Activated T-helper 1 cell treated with anti-CD3 and anti-CD28 coated beads, Interleukin-12 subunit alpha, Interleukin-12 subunit beta, Interleukin-2, Interleukin-4 antibody, amounts not matched to agents 30 ng/mL and 10 ng/mL and 1 ng/mL, durations not matched to agents 14 hours and 24 hours and 36 hours (primary cell): ENCODE measurements at regions of chr3 and their contacts with region 1.

Region 1: DNA sequence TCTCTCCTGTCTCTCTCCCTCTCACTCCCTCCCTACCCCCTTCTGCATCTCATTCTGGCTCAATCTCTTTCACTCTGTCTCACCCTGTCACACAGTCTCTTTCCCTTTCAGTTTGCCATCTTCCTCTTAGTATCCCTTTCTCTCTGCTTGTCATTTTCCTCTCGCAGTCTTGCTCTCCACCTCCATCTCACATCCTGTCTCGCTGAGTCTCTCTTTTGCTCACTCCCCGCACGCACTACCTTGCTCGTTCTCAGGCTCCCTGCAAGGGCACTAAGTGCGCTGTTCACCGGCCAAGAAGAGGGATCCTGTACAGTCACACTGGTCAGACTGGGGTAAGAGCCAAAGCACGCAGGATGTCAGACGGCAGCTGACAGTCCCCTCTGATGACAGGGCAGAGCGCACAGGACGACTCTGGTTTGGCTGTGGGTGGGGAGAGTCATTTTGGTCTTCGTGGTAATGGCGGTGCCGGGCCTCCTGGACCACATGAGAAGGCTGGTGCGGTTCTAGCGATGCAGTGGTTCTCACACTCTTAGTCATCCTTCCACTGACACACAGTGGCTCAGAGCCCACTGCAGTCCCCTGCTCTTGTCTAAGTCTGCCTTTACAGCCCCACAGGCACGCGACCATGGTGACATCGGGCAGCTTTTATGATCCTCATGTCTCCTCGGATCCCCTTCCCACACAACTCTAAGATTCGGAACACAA is 356.8 kb downstream of the FOXP1 start:
- DNase-seq: peak; percentile 81
- H3K4me3 Mint-ChIP-seq: peak overlapping the region; percentile 79
- H3K27ac Mint-ChIP-seq: peak overlapping the region; percentile 91
- H3K4me1 Mint-ChIP-seq: peaks cover 29% of the 10 kb centered on the region
- H3K27me3 Mint-ChIP-seq: peaks cover 48% of the 10 kb centered on the region

Region 2: GRCh38 chr3:70871909-70872656 is 354.6 kb before region 1 on chr3:
- intact Hi-C with region 1: no loop called
- DNase-seq: no peak
- H3K4me3 Mint-ChIP-seq: no peak overlapping the region
- H3K27ac Mint-ChIP-seq: no peak overlapping the region
- H3K4me1 Mint-ChIP-seq: no peaks in the 10 kb centered on the region
- H3K27me3 Mint-ChIP-seq: peaks cover 4% of the 10 kb centered on the region

Region 3: GRCh38 chr3:71006810-71007785 is 219.6 kb before region 1 on chr3:
- intact Hi-C with region 1: loop called (anchors 1 kb)
- DNase-seq: no peak
- H3K4me3 Mint-ChIP-seq: no peak overlapping the region
- H3K27ac Mint-ChIP-seq: no peak overlapping the region
- H3K4me1 Mint-ChIP-seq: peaks cover 59% of the 10 kb centered on the region
- H3K27me3 Mint-ChIP-seq: no peaks in the 10 kb centered on the region

Region 4: GRCh38 chr3:71087143-71088018 is 139.3 kb before region 1 on chr3:
- intact Hi-C with region 1: loop called (anchors 1 kb)
- DNase-seq: peak; percentile 44
- H3K4me3 Mint-ChIP-seq: peak overlapping the region; percentile 46
- H3K27ac Mint-ChIP-seq: peak overlapping the region; percentile 89
- H3K4me1 Mint-ChIP-seq: peaks cover 77% of the 10 kb centered on the region
- H3K27me3 Mint-ChIP-seq: peaks cover 2% of the 10 kb centered on the region

Region 5: GRCh38 chr3:71195492-71195891 is 31.2 kb before region 1 on chr3:
- intact Hi-C with region 1: loop called (anchors 1 kb)
- DNase-seq: no peak
- H3K4me3 Mint-ChIP-seq: no peak overlapping the region
- H3K27ac Mint-ChIP-seq: no peak overlapping the region
- H3K4me1 Mint-ChIP-seq: peaks cover 18% of the 10 kb centered on the region
- H3K27me3 Mint-ChIP-seq: peaks cover 5% of the 10 kb centered on the region

Region 6: GRCh38 chr3:71423151-71423906 is 196.6 kb after region 1 on chr3:
- intact Hi-C with region 1: loop called (anchors 1 kb)
- DNase-seq: no peak
- H3K4me3 Mint-ChIP-seq: no peak overlapping the region
- H3K27ac Mint-ChIP-seq: no peak overlapping the region
- H3K4me1 Mint-ChIP-seq: peaks cover 22% of the 10 kb centered on the region
- H3K27me3 Mint-ChIP-seq: peaks cover 61% of the 10 kb centered on the region

Region 7: GRCh38 chr3:71725279-71725991 is 498.7 kb after region 1 on chr3 and contains the start of gene EIF4E3:
- intact Hi-C with region 1: loop called (anchors 1 kb)
- DNase-seq: peak; percentile 43
- H3K4me3 Mint-ChIP-seq: peak within 1 kb of the TSS; percentile 90
- H3K27ac Mint-ChIP-seq: peak within 1 kb of the TSS; percentile 95
- H3K4me1 Mint-ChIP-seq: peaks cover 75% of the 10 kb centered on the region
- H3K27me3 Mint-ChIP-seq: no peaks in the 10 kb centered on the region
- total RNA-seq, gene EIF4E3: 20.6 and 21.8 TPM in 2 replicates